ENCODE measurements at regions of chr11 and their contacts with region 1.

Region 1: GRCh38 chr11:72333661-72334060 is 89.7 kb upstream of the PHOX2A start:
- DNase-seq: peak; percentile 69
- ATAC-seq: peak; percentile 99
- H3K4me3 Mint-ChIP-seq: no peak overlapping the region
- H3K27ac Mint-ChIP-seq: peak overlapping the region; percentile 43; the same call in 1 of the 2 replicates
- H3K4me1 Mint-ChIP-seq: peaks cover 13% of the 10 kb centered on the region
- H3K27me3 Mint-ChIP-seq: no peaks in the 10 kb centered on the region
- CTCF ChIP-seq: no peak

Region 2: DNA sequence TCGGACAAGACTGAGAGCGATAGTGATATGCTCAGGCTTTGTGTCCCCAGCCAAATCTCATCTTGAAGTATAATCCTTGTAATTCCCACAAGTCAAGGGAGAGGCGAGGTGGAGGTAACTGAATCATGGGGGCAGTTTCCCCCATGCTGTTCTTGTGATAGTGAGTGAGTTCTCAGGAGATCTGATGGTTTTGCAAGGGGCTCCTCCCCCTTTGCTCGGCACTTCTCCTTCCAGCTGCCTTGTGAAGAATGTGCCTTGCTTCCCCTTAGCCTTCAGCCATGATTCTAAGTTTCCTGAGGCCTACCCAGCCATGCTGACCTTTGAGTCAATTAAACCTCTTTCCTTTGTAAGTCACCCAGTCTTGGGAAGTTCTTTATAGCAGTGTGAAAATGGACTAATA is 124.6 kb before region 1 on chr11:
- CTCF ChIA-PET with region 1: no interaction called
- POLR2A ChIA-PET with region 1: no interaction called
- DNase-seq: no peak
- ATAC-seq: no peak
- H3K4me3 Mint-ChIP-seq: no peak overlapping the region
- H3K27ac Mint-ChIP-seq: no peak overlapping the region
- H3K4me1 Mint-ChIP-seq: no peaks in the 10 kb centered on the region
- H3K27me3 Mint-ChIP-seq: peaks cover 11% of the 10 kb centered on the region
- CTCF ChIP-seq: no peak

Region 3: GRCh38 chr11:72352859-72353551 is 19.3 kb after region 1 on chr11:
- CTCF ChIA-PET with region 1: interaction called, 28 read pairs
- POLR2A ChIA-PET with region 1: no interaction called
- DNase-seq: peak; percentile 47
- ATAC-seq: peak; percentile 79
- H3K4me3 Mint-ChIP-seq: no peak overlapping the region
- H3K27ac Mint-ChIP-seq: no peak overlapping the region
- H3K4me1 Mint-ChIP-seq: peaks cover 5% of the 10 kb centered on the region
- H3K27me3 Mint-ChIP-seq: no peaks in the 10 kb centered on the region
- CTCF ChIP-seq: no peak

Region 4: GRCh38 chr11:72405009-72405408 is 71.3 kb after region 1 on chr11:
- CTCF ChIA-PET with region 1: interaction called, 10 read pairs
- POLR2A ChIA-PET with region 1: no interaction called
- DNase-seq: no peak
- ATAC-seq: no peak
- H3K4me3 Mint-ChIP-seq: no peak overlapping the region
- H3K27ac Mint-ChIP-seq: no peak overlapping the region
- H3K4me1 Mint-ChIP-seq: peaks cover 23% of the 10 kb centered on the region
- H3K27me3 Mint-ChIP-seq: no peaks in the 10 kb centered on the region
- CTCF ChIP-seq: no peak

Region 5: GRCh38 chr11:72483412-72484186 is 149.9 kb after region 1 on chr11:
- CTCF ChIA-PET with region 1: no interaction called
- POLR2A ChIA-PET with region 1: no interaction called
- DNase-seq: no peak
- ATAC-seq: no peak
- H3K4me3 Mint-ChIP-seq: no peak overlapping the region
- H3K27ac Mint-ChIP-seq: no peak overlapping the region
- H3K4me1 Mint-ChIP-seq: no peaks in the 10 kb centered on the region
- H3K27me3 Mint-ChIP-seq: no peaks in the 10 kb centered on the region
- CTCF ChIP-seq: no peak